ENCODE measurements at regions of chr7 and their contacts with region 1.

Region 1: GRCh38 chr7:11427686-11428273 is 404.2 kb downstream of the THSD7A start:
- DNase-seq: peak; percentile 6
- H3K4me3 Mint-ChIP-seq: no peak overlapping the region
- H3K27ac Mint-ChIP-seq: no peak overlapping the region
- H3K4me1 Mint-ChIP-seq: no peaks in the 10 kb centered on the region
- H3K27me3 Mint-ChIP-seq: no peaks in the 10 kb centered on the region

Region 2: GRCh38 chr7:11373546-11374142 is 54.1 kb before region 1 on chr7:
- CTCF ChIA-PET with region 1: no interaction called
- intact Hi-C with region 1: no loop called
- DNase-seq: no peak
- H3K4me3 Mint-ChIP-seq: no peak overlapping the region
- H3K27ac Mint-ChIP-seq: no peak overlapping the region
- H3K4me1 Mint-ChIP-seq: no peaks in the 10 kb centered on the region
- H3K27me3 Mint-ChIP-seq: no peaks in the 10 kb centered on the region

Region 3: DNA sequence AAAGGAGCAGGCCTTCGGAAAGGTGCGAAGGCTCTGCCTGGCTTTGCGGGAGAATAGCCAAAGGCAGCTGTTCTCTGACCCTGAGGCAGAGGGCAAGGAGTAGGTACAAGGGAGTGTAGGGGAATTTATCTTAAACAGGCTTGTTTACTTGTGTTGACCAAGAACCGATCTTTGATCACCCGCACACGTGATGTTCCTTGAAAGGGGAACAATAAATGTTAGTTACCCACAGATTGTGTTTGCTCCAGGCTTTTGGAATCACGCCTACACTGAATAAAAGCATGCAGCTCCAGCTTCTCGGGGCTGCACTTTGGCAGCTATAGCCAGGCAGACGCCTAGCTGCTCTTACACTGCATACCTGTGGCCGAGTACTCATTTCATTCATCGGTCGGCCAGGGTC is 33.3 kb before region 1 on chr7:
- CTCF ChIA-PET with region 1: no interaction called
- intact Hi-C with region 1: no loop called
- DNase-seq: no peak
- H3K4me3 Mint-ChIP-seq: no peak overlapping the region
- H3K27ac Mint-ChIP-seq: no peak overlapping the region
- H3K4me1 Mint-ChIP-seq: no peaks in the 10 kb centered on the region
- H3K27me3 Mint-ChIP-seq: no peaks in the 10 kb centered on the region

Region 4: DNA sequence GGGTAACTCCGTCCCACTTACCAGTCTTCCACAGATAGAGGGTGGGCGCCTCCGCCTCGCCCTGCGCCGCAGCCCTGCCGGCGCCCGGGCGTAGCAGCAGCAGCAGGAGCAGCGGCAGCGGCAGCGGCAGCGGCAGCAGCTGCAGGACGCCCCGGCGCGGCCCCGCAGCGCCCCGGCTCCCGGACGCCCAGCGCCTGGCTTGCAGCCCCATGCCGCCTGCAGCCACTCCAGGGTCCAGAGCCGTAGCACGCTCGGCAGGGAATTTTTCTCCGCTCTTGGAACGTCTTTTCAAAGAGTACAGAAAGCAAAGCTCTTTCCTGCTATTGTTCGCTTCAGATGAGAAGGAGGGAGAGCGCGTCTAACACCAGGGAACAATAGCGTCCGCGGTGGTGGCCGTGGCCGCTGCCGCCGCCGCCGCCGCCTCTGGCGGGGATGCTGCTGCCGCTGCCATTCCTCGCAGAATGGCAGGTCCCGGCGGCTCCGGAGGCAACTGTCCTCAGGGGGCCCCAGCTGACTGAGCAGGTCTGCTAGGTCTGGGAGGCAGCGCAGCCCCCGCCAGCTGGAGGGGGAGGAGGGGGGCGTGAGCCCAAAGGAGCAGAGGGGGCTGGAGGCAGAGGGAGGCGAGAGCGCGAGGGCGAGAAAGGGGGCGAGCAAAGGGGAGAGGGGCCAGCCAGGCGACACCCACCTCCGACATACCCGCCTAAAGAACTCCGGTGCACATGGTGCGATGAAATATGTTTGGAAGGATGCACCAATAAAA is 404.1 kb after region 1 on chr7 and contains the start of gene THSD7A:
- CTCF ChIA-PET with region 1: no interaction called
- intact Hi-C with region 1: loop called (anchors 5 kb)
- DNase-seq: no peak
- H3K4me3 Mint-ChIP-seq: peak within 1 kb of the TSS; percentile 32
- H3K27ac Mint-ChIP-seq: no peak within 1 kb of the TSS
- H3K4me1 Mint-ChIP-seq: peaks cover 12% of the 10 kb centered on the region
- H3K27me3 Mint-ChIP-seq: peaks cover 47% of the 10 kb centered on the region
- total RNA-seq, gene THSD7A: not detected

Region 5: DNA sequence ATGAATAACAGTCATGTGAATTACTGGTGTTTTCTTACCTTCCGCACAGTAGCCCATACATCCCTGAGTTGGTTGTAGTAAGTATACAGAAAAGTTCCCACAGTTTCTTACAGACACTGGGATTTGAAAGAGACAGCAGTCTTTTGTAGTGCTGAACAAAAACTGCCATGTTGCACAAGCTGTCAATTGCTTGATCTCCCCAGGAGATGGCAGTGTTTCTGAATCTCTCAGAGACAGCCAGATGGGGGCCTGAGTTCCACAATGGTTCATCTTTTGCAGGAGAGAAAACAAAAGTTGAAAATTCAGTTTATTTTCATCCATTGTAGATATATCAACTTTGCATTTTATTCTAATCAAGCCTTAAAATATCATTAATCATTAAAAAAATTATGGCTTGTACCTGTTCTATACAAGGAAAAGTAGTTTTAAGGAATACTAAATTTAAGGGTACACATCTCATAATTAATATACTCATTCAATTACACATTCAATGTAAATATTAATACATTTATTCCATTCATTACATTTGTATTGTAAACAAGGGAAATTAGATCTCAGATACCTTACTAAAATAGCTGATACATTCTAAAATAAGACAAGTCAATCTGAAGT is 961.4 kb after region 1 on chr7:
- CTCF ChIA-PET with region 1: no interaction called
- intact Hi-C with region 1: loop called (anchors 5 kb)
- DNase-seq: peak; percentile 64
- H3K4me3 Mint-ChIP-seq: no peak overlapping the region
- H3K27ac Mint-ChIP-seq: no peak overlapping the region
- H3K4me1 Mint-ChIP-seq: no peaks in the 10 kb centered on the region
- H3K27me3 Mint-ChIP-seq: no peaks in the 10 kb centered on the region

Region 6: DNA sequence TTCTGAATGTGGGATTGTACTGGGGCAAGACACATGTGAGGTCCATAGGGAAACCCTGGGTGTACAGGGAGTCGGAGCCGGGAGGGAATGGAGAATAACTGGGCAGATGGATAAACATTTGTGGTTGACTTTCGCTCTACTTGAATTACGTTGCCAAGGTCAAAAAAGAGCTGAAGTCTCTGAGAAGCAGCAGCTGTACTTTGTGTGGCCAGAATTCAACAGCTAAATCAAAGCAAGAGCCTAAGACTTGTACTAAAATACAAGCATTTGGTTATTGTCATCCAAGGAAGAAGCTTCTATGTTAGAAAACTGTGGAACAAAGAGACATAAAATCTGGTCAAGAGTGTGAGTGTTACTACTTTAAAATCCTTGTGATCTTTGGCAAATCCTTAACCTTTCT is 1716.9 kb after region 1 on chr7:
- CTCF ChIA-PET with region 1: no interaction called
- intact Hi-C with region 1: no loop called
- DNase-seq: no peak
- H3K4me3 Mint-ChIP-seq: no peak overlapping the region
- H3K27ac Mint-ChIP-seq: no peak overlapping the region
- H3K4me1 Mint-ChIP-seq: no peaks in the 10 kb centered on the region
- H3K27me3 Mint-ChIP-seq: peaks cover 2% of the 10 kb centered on the region

Measured in activated naive CD4-positive, alpha-beta T cell treated with anti-CD3 and anti-CD28 coated beads for 36 hours (primary cell).